OCI-LY7 (cell line): ENCODE measurements at regions of chr6 and their contacts with region 1.

Region 1: GRCh38 chr6:40550202-40551101 is 36.7 kb downstream of the LRFN2 start:
- DNase-seq: peak; percentile 47
- H3K4me3 ChIP-seq: no peak overlapping the region
- H3K27ac ChIP-seq: no peak overlapping the region
- H3K4me1 ChIP-seq: no peaks in the 10 kb centered on the region
- CTCF ChIP-seq: peak; percentile 82

Region 2: GRCh38 chr6:40528051-40528450 is 22.4 kb before region 1 on chr6:
- CTCF ChIA-PET with region 1: no interaction called
- POLR2A ChIA-PET with region 1: no interaction called
- intact Hi-C with region 1: no loop called
- DNase-seq: no peak
- H3K4me3 ChIP-seq: no peak overlapping the region
- H3K27ac ChIP-seq: no peak overlapping the region
- H3K4me1 ChIP-seq: no peaks in the 10 kb centered on the region
- CTCF ChIP-seq: no peak

Region 3: GRCh38 chr6:40780637-40781036 is 230.2 kb after region 1 on chr6:
- CTCF ChIA-PET with region 1: no interaction called
- POLR2A ChIA-PET with region 1: no interaction called
- intact Hi-C with region 1: loop called (anchors 2 kb)
- DNase-seq: no peak
- H3K4me3 ChIP-seq: no peak overlapping the region
- H3K27ac ChIP-seq: no peak overlapping the region
- H3K4me1 ChIP-seq: no peaks in the 10 kb centered on the region
- CTCF ChIP-seq: no peak

Region 4: DNA sequence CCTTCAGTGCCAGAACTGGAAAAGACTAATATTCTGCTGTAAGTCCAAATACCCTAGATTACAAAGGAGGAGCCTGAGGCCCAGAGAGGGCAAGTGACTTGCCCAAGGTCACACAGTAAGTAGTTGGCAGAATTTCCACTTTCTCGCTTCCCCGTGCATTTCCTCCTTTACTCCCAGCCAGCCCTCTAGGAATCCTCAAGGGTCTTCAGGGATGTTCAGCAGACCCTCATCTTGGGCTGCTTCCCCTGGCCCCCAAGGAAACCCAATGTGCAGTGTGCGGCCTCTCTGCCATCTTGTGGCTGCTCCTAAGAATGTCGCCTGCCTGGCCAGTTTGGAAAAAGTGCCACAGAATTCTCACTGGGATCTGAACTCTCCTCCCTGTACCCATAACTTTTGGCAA is 254.5 kb after region 1 on chr6:
- CTCF ChIA-PET with region 1: no interaction called
- POLR2A ChIA-PET with region 1: no interaction called
- intact Hi-C with region 1: no loop called
- DNase-seq: peak; percentile 5
- H3K4me3 ChIP-seq: no peak overlapping the region
- H3K27ac ChIP-seq: no peak overlapping the region
- H3K4me1 ChIP-seq: no peaks in the 10 kb centered on the region
- CTCF ChIP-seq: peak; percentile 70

Region 5: DNA sequence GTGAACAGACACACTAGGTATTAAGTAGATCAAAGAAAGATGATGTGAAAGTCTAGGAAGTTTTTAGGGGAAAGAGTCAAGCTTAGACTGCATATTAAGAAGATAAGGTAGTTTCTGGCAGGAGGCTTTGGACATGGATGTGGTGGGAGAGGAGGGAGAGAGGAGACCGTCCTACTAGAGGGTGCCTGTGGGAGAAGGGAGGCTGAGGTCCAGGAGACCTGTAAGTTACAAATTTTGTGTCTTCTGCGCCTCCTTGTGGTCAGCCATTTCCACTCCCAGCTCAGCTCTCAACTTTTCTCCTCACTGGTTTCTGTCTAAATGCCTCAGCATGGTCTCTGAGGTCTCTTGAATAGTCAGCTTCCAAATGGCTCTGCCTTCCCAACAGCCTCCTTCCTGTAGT is 295.1 kb after region 1 on chr6:
- CTCF ChIA-PET with region 1: no interaction called
- POLR2A ChIA-PET with region 1: no interaction called
- intact Hi-C with region 1: loop called (anchors 10 kb)
- DNase-seq: peak; percentile 36
- H3K4me3 ChIP-seq: no peak overlapping the region
- H3K27ac ChIP-seq: no peak overlapping the region
- H3K4me1 ChIP-seq: no peaks in the 10 kb centered on the region
- CTCF ChIP-seq: peak; percentile 77